PC-9 (cell line): ENCODE measurements at regions of chr9 and their contacts with region 1.

Region 1: DNA sequence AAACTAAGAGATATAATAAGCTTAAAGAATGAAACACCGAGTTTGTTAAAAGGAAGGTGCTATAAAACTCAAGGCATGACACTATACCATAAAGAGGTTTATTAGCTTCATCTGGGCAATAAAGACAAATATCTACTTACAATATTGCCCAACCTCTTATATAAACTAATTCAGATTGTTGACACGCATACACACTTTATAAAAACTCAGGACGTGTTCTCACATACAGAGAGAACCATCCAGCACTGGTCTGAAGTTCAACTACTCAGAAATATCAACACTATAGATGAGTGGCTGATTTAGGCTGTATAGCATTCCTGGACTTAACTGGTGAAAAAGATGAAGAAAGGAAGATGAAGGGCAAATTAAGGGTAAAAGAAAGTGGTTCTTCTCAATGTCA is 81.2 kb downstream of the FRMD3 start:
- DNase-seq: no peak
- H3K4me3 ChIP-seq: no peak overlapping the region
- H3K27ac ChIP-seq: no peak overlapping the region
- H3K4me1 ChIP-seq: no peaks in the 10 kb centered on the region
- H3K27me3 ChIP-seq: no peaks in the 10 kb centered on the region
- CTCF ChIP-seq: no peak

Region 2: DNA sequence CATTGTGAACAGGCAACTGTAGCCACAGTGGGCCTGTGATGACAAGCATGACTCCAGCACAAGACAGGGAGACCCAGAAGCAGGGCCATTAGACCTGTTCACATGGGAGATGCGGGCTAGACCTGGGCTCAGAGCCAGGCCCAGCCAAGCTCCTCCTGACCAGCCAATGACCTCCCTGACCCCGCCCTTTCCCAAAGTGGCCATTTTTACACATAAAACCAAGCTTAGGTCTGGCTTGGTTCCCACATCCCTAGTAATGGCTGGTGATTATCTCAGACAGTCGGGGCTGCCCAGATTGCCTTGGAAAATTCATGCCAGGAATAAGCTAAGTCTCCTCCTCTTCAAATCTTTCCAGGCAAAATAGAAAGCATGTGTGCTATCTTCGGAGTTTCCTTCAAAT is 12.9 kb before region 1 on chr9:
- CTCF ChIA-PET with region 1: no interaction called
- POLR2A ChIA-PET with region 1: interaction called, 26 read pairs
- intact Hi-C with region 1: no loop called
- DNase-seq: no peak
- H3K4me3 ChIP-seq: no peak overlapping the region
- H3K27ac ChIP-seq: no peak overlapping the region
- H3K4me1 ChIP-seq: no peaks in the 10 kb centered on the region
- H3K27me3 ChIP-seq: no peaks in the 10 kb centered on the region
- CTCF ChIP-seq: no peak